Calu3 (cell line): ENCODE measurements at regions of chr13 and their contacts with region 1.

Region 1: DNA sequence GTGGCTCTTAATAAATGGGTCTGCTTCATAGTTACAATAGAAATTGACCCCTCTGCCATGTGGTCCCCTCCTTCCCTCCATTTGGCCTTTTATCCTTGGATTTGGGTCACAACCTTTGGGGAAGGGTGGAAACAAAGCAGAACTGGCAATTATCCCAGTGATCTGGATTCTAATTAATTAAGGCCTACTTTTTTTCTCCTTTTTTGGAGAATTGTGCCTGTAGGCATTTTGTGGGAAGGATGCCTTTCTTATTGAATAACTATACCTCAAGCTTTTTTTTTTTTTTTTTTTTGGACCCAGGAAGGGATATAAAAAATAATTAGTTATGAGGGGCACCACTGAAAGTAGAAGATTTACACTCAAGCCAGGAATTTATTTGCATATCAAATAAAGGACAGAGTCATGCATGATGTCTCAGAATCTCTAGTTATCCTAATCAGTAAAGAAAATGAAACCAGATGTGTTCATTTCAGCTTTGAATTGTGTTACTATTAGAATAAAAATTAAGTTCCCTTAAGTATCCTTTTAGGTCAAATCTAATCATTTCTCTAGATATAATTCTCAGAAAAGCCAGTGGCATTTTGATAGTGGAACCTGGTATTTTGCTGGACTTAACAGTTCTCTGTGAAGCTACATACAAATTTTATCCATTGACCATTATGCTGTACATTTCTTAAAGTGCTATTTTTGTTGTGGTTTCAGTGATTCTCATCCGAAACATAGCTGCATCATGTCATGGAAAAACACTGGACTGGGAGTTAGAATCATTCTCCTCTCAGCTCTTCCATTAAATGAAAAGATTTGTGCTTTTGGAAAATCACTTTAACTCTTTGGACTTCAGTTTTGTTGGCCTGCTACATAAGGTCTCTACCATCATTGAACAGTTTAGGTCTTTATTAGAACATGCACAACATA is 129.3 kb downstream of the KCNRG start:
- DNase-seq: no peak
- H3K4me3 Mint-ChIP-seq: no peak overlapping the region
- H3K27ac Mint-ChIP-seq: no peak overlapping the region
- H3K4me1 Mint-ChIP-seq: no peaks in the 10 kb centered on the region
- H3K27me3 Mint-ChIP-seq: no peaks in the 10 kb centered on the region
- CTCF ChIP-seq: no peak

Region 2: GRCh38 chr13:49836516-49836915 is 308.0 kb before region 1 on chr13:
- CTCF ChIA-PET with region 1: no interaction called
- intact Hi-C with region 1: no loop called
- DNase-seq: no peak
- H3K4me3 Mint-ChIP-seq: no peak overlapping the region
- H3K27ac Mint-ChIP-seq: no peak overlapping the region
- H3K4me1 Mint-ChIP-seq: no peaks in the 10 kb centered on the region
- H3K27me3 Mint-ChIP-seq: no peaks in the 10 kb centered on the region
- CTCF ChIP-seq: no peak

Region 3: GRCh38 chr13:50089633-50090032 is 54.9 kb before region 1 on chr13:
- CTCF ChIA-PET with region 1: interaction called, 10 read pairs
- intact Hi-C with region 1: no loop called
- DNase-seq: no peak
- H3K4me3 Mint-ChIP-seq: no peak overlapping the region
- H3K27ac Mint-ChIP-seq: no peak overlapping the region
- H3K4me1 Mint-ChIP-seq: no peaks in the 10 kb centered on the region
- H3K27me3 Mint-ChIP-seq: no peaks in the 10 kb centered on the region
- CTCF ChIP-seq: no peak